ENCODE measurements at regions of chr11 and their contacts with region 1.

Region 1: DNA sequence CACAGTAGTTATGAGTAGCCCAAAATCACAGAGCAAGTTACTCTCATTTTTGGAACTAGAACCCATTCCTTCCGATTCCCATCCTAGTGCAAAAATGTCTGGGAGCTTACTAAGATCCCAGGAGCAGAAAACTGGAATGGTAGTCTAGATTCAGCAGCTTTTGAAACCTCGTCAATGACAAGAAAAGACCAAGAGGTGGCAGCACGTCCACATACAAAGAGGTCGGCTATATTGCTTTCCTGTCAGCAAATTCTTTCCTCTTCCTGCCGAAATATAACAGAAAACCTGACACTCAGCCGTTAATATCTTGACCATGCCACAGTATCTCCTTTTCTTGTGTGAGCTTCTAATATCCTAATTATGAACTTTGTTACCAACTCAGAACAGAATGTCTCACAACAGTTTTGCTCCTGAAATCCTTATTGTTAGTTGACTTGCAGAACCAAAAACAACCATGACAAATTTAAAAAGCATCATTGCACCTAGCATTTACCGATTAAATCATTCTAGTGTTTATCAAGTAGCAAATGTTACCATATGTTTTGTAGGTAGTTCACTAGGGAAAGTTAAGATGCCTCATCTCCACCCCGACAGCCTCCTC is 92.8 kb upstream of the OR9G4 start:
- DNase-seq: peak; percentile 59
- H3K4me3 Mint-ChIP-seq: no peak overlapping the region
- H3K27ac Mint-ChIP-seq: no peak overlapping the region
- H3K4me1 Mint-ChIP-seq: no peaks in the 10 kb centered on the region
- H3K27me3 Mint-ChIP-seq: peaks cover 14% of the 10 kb centered on the region

Region 2: DNA sequence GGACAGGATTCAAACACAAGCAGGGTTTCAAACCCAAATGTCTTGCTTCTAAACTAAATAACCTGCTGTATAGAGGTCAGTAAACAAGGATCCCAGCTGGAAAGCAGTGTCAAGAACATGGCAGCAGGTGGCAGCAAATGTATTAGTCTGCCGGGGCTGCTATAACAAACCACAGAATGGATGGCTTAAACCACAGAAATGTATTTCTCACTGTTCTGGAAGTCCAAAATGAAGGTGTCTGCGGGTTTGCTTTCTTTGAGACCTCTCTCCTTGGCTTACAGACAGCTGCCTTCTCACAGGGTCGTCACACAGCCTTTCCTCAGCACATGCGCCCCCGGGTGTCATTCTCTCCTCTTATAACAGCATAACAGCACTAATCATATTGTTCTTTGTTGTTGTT is 275.3 kb after region 1 on chr11:
- CTCF ChIA-PET with region 1: no interaction called
- intact Hi-C with region 1: loop called (anchors 2 kb)
- DNase-seq: peak; percentile 42
- H3K4me3 Mint-ChIP-seq: no peak overlapping the region
- H3K27ac Mint-ChIP-seq: no peak overlapping the region
- H3K4me1 Mint-ChIP-seq: no peaks in the 10 kb centered on the region
- H3K27me3 Mint-ChIP-seq: peaks cover 3% of the 10 kb centered on the region

Region 3: GRCh38 chr11:57277845-57278709 is 436.8 kb after region 1 on chr11:
- CTCF ChIA-PET with region 1: interaction called, 3 read pairs
- intact Hi-C with region 1: loop called (anchors 1 kb)
- DNase-seq: peak; percentile 60
- H3K4me3 Mint-ChIP-seq: no peak overlapping the region
- H3K27ac Mint-ChIP-seq: no peak overlapping the region
- H3K4me1 Mint-ChIP-seq: peaks cover 5% of the 10 kb centered on the region
- H3K27me3 Mint-ChIP-seq: peaks cover 23% of the 10 kb centered on the region

Measured in activated naive CD4-positive, alpha-beta T cell treated with anti-CD3 and anti-CD28 coated beads for 36 hours (primary cell).